Naive thymus-derived CD4-positive, alpha-beta T cell (primary cell): ENCODE measurements at regions of chr9 and their contacts with region 1.

Region 1: DNA sequence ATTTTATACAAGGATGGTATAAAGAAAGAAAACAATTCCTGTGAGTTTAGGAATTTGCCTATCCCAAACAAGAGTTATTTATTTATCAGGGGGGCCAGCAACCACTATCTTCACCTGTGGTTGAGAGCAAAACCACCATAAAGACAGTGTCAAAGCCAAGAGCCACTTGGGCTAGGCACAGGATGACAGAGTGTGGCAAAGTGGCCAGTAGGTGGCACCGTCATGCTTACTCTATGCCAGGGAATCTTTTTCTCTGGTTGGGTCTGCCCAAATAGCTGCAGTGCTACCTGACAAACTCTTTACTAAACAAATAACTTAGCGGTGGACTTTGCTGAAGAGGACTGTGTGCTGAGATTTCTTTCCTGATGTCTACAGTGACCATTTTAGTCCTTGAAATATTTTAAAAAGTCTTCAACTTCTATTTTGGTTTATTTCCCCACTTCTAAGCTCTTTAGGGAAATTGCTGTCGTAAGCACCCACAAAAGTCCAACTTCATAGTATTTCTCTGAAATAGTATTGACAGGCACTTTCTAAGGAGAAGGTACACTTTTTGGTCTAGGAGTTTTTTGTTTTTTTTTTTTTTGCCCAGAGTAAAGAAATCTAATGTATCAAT is 285.0 kb downstream of the RFX3 start:
- DNase-seq: peak; percentile 23 to 58 (median 51)
- ATAC-seq: peak; percentile 89
- H3K4me3 ChIP-seq: no peak overlapping the region
- H3K4me3 Mint-ChIP-seq: no peak overlapping the region
- H3K27ac ChIP-seq: no peak overlapping the region
- H3K27ac Mint-ChIP-seq: no peak overlapping the region
- H3K4me1 ChIP-seq: no peaks in the 10 kb centered on the region
- H3K4me1 Mint-ChIP-seq: peaks cover 0 to 9% (median 0%) of the 10 kb centered on the region in 7 donors
- H3K27me3 ChIP-seq: no peaks in the 10 kb centered on the region
- H3K27me3 Mint-ChIP-seq: no peaks in the 10 kb centered on the region

Region 2: GRCh38 chr9:2780846-2781245 is 459.9 kb before region 1 on chr9:
- CTCF ChIA-PET with region 1: no interaction called
- POLR2A ChIA-PET with region 1: no interaction called
- intact Hi-C with region 1: no loop called
- DNase-seq: no peak
- ATAC-seq: no peak
- H3K4me3 ChIP-seq: no peak overlapping the region
- H3K4me3 Mint-ChIP-seq: no peak overlapping the region
- H3K27ac ChIP-seq: no peak overlapping the region
- H3K27ac Mint-ChIP-seq: no peak overlapping the region
- H3K4me1 ChIP-seq: no peaks in the 10 kb centered on the region
- H3K4me1 Mint-ChIP-seq: no peaks in the 10 kb centered on the region
- H3K27me3 ChIP-seq: no peaks in the 10 kb centered on the region
- H3K27me3 Mint-ChIP-seq: no peaks in the 10 kb centered on the region

Region 3: DNA sequence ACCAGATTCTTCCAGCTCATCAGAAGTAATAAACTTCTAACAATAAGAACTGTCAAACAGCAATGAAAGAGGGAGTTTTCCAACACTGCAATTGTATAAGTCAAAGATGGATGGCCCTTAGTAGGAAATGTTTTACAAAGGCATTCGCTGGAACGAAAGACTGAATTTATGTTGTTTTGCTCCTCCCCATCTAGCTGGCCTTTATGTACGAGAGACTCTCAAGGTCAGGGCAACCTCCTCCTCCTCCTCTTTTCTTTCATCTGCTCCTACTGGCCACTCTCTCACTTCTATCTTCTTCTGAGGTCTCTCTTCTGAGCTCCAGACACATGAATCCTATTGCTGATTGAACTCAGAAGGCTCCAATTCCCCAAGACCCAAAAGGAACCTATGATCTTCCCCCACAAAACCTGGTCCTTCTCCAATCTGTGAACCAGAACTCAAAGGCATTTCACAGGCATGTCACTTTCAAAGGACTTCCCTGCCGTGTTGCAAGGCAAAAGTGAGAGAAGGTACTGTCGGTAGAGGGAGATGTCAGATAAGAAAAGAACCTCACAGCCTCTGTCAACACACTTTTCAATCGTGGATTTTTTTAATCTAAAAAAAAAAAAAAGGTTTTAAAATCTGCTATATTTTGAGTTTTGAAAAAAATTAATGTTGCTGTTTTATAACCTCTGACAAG is 368.4 kb before region 1 on chr9:
- CTCF ChIA-PET with region 1: no interaction called
- POLR2A ChIA-PET with region 1: no interaction called
- intact Hi-C with region 1: loop called in 1 of 2 experiments (anchors 1 kb)
- DNase-seq: peak in 7 of 9 donors; percentile 18 to 56 (median 48)
- ATAC-seq: peak; percentile 79
- H3K4me3 ChIP-seq: no peak overlapping the region
- H3K4me3 Mint-ChIP-seq: peak overlapping the region in 6 of 10 donors; percentile 4 to 49 (median 22)
- H3K27ac ChIP-seq: no peak overlapping the region
- H3K27ac Mint-ChIP-seq: peak overlapping the region in 7 of 9 donors; percentile 0 to 74 (median 49)
- H3K4me1 ChIP-seq: peaks cover 0 to 5% of the 10 kb centered on the region in 2 donors
- H3K4me1 Mint-ChIP-seq: peaks cover 0 to 45% (median 23%) of the 10 kb centered on the region in 7 donors
- H3K27me3 ChIP-seq: no peaks in the 10 kb centered on the region
- H3K27me3 Mint-ChIP-seq: peaks cover 0 to 17% (median 6%) of the 10 kb centered on the region in 5 donors

Region 4: DNA sequence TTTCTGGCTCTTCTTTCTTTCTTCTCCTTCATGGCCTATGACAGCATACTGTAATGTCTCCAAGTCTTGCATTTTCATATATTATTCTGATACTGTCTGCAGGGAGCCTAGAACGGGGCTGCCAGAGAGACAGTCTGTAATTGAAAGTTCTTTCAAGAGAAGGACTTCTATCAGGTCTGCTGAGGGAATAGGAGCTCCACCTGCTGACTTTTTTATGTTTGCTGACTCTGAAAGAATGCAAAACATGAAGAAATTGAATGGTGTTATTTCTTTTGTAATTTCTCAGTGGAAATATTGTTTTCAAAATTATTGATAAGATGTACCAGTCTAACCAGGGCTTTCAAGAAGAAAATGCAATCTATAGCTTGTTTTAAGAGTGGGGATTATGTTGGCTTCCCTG is 406.9 kb after region 1 on chr9:
- CTCF ChIA-PET with region 1: no interaction called
- POLR2A ChIA-PET with region 1: no interaction called
- intact Hi-C with region 1: loop called in 1 of 2 experiments (anchors 1 kb)
- DNase-seq: peak in 4 of 9 donors; percentile 1 to 18 (median 3)
- ATAC-seq: no peak
- H3K4me3 ChIP-seq: no peak overlapping the region
- H3K4me3 Mint-ChIP-seq: no peak overlapping the region
- H3K27ac ChIP-seq: no peak overlapping the region
- H3K27ac Mint-ChIP-seq: no peak overlapping the region
- H3K4me1 ChIP-seq: no peaks in the 10 kb centered on the region
- H3K4me1 Mint-ChIP-seq: no peaks in the 10 kb centered on the region
- H3K27me3 ChIP-seq: no peaks in the 10 kb centered on the region
- H3K27me3 Mint-ChIP-seq: no peaks in the 10 kb centered on the region

Region 5: DNA sequence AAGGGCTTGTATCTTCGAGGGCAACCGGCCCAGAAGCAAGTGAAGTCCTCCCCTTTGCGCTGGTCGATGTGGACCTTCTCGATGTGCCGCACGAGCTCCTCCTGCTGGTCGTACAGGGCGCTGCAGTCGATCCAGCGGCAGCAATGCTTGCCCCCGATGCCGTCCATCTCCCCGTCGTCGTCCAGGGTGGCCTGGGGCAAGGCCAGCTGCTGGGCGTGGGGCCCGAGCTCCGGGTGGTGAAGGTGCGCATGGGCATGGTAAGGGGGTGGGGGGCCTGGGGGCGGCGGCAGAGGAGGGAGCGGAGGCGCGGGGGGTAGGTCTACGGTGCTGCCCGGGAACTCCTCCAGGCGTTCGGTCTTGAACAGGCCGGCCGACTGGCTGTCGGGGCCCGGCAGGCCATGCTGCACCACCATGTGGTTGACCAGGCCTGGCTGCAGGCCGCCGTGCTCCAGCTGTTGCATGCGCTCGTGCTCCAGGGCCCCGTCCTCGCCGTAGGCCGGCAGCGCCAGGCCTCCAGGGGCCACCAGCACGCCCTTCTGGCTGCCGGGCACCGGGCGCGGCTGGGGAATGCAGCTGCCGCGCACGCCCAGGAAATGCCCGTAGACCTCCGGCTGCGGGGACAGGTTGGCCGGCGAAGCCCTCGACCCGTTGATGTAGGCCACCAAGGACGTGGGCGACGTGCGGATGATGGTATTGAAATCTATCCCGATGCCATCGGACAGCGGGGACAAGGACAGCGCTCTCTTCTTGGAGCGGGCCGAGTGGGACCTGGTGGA is 877.3 kb after region 1 on chr9:
- CTCF ChIA-PET with region 1: no interaction called
- POLR2A ChIA-PET with region 1: no interaction called
- intact Hi-C with region 1: loop called (anchors 2 to 5 kb)
- DNase-seq: peak in 7 of 9 donors; percentile 5 to 48 (median 13)
- ATAC-seq: no peak
- H3K4me3 ChIP-seq: no peak overlapping the region
- H3K4me3 Mint-ChIP-seq: no peak overlapping the region
- H3K27ac ChIP-seq: no peak overlapping the region
- H3K27ac Mint-ChIP-seq: no peak overlapping the region
- H3K4me1 ChIP-seq: no peaks in the 10 kb centered on the region
- H3K4me1 Mint-ChIP-seq: peaks cover 0 to 2% (median 0%) of the 10 kb centered on the region in 7 donors
- H3K27me3 ChIP-seq: no peaks in the 10 kb centered on the region
- H3K27me3 Mint-ChIP-seq: no peaks in the 10 kb centered on the region

Region 6: DNA sequence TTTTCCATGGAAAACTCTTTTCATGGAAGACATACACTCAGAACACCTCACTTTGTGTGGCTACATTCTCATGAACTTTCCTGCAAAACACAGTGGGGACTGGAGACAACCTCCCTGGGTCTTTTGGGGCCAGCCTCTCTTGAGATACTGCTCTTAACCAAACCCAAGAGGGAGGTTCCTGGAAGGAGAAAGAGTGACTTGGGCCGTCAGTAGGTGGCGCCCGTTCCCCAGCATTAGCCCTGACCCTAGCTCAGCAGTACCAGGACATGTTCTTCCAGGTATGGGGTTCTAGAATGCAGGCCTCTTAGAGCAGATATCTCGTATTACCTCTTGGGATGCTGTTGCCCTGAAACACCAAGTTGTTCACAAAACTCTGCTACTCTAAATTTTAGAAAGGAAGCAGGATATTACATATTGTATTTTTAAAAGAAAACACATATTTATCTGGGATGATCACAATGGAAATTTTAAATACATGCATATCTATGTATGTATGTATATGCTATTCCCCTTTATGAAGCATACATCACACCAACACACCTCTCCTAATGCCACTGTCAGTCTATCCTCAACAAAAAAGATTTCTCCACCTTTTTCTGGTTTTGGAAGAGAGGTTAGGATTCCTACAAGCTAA is 1074.9 kb after region 1 on chr9:
- CTCF ChIA-PET with region 1: no interaction called
- POLR2A ChIA-PET with region 1: no interaction called
- intact Hi-C with region 1: loop called in 1 of 2 experiments (anchors 1 kb)
- DNase-seq: peak; percentile 37 to 74 (median 62)
- ATAC-seq: peak; percentile 89
- H3K4me3 ChIP-seq: no peak overlapping the region
- H3K4me3 Mint-ChIP-seq: no peak overlapping the region
- H3K27ac ChIP-seq: no peak overlapping the region
- H3K27ac Mint-ChIP-seq: no peak overlapping the region
- H3K4me1 ChIP-seq: no peaks in the 10 kb centered on the region
- H3K4me1 Mint-ChIP-seq: peaks cover 0 to 17% (median 6%) of the 10 kb centered on the region in 7 donors
- H3K27me3 ChIP-seq: no peaks in the 10 kb centered on the region
- H3K27me3 Mint-ChIP-seq: peaks cover 0 to 13% (median 0%) of the 10 kb centered on the region in 5 donors

Region 7: GRCh38 chr9:4366591-4367330 is 1126.0 kb after region 1 on chr9:
- CTCF ChIA-PET with region 1: interaction called, 4 read pairs
- POLR2A ChIA-PET with region 1: no interaction called
- intact Hi-C with region 1: loop called in 1 of 2 experiments (anchors 1 kb)
- DNase-seq: peak in 5 of 9 donors; percentile 11 to 37 (median 23)
- ATAC-seq: no peak
- H3K4me3 ChIP-seq: no peak overlapping the region
- H3K4me3 Mint-ChIP-seq: no peak overlapping the region
- H3K27ac ChIP-seq: no peak overlapping the region
- H3K27ac Mint-ChIP-seq: no peak overlapping the region
- H3K4me1 ChIP-seq: no peaks in the 10 kb centered on the region
- H3K4me1 Mint-ChIP-seq: peaks cover 0 to 1% (median 0%) of the 10 kb centered on the region in 7 donors
- H3K27me3 ChIP-seq: no peaks in the 10 kb centered on the region
- H3K27me3 Mint-ChIP-seq: peaks cover 0 to 8% (median 0%) of the 10 kb centered on the region in 5 donors